ENCODE measurements at regions of chr13 and their contacts with region 1.

Region 1: GRCh38 chr13:39273953-39274738 is 235.9 kb downstream of the NHLRC3 start:
- DNase-seq: no peak
- ATAC-seq: peak; percentile 50

Region 2: DNA sequence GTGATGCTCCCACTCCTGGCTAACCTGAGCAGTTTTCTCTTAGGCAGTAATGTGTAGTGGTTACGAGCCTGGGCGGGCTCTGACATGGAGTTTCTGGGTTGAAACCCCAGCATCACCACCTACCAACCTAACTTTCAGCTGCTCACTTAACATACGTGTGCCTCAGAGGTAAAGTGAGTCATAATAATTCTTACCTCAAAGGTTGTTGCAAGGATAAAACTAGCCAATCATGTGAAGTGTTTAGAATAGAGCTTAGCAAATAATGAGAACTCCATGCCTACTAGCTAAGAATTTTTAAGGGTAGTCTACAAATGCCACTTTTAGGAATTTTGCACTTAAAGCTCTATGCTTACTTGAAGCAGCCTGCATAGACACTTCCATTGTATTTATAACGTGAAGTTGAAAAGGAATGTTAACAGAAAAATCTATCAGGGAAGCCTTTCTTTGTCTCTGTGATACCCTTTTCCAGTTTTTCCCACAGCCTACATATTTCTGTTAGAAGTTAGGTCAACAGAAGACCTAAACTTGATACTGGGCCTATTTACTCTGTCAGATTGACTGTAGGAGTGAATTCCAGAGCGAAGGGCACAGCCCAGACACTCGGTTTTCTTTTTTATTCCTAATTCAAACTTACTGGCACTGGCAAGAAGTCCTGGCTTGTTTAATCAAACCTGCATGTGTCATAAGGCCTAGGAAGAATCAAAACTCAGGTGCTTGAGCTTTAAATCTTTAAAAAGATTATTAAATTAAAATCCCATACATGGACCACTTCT is 496.6 kb before region 1 on chr13:
- intact Hi-C with region 1: no loop called
- DNase-seq: no peak
- ATAC-seq: no peak

Region 3: GRCh38 chr13:39311619-39312018 is 37.5 kb after region 1 on chr13:
- intact Hi-C with region 1: loop called (anchors 5 kb)
- DNase-seq: no peak
- ATAC-seq: peak; percentile 87

Region 4: DNA sequence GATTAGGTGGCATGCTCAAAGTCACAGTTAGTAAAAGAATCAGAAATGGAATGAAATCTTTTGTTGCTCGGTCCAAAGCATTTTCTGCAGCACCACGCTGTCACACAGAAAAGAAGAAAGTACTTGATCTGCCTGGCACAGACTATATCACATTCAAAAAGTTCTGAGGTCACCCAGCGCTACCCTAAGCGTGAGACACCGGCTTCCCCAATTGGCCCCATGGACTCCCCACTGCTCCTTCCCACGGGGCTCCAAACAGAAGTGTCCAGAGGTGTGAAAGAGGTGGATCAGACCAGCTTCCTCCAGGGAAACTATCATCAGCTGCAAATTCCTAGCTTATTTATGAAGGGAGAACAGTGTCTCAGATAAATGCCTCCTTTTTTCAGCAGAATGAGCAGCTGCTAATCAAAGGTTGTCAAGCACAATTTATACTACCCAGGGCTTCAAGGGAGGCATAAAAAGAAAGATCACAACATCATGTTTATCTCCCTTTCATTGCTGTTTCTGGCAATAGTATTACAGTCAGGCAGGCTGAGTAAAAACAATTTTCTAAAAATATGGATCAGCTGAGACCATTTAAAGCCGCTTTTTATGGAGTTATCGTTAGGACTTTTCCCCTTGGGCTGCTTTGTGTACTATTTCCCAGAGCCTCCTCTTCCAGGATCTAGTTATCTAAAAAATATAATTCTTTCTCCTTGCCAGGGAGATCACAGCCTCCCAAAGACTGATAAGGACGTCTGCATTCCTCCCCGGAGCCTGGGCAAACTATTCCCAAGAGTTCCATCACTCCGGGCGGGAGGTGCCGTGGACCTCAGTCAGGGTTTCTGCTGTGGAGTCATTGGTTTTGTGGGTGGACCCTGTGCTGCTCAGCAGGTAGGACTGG is 120.9 kb after region 1 on chr13:
- intact Hi-C with region 1: loop called (anchors 5 kb)
- DNase-seq: no peak
- ATAC-seq: peak; percentile 56

Region 5: DNA sequence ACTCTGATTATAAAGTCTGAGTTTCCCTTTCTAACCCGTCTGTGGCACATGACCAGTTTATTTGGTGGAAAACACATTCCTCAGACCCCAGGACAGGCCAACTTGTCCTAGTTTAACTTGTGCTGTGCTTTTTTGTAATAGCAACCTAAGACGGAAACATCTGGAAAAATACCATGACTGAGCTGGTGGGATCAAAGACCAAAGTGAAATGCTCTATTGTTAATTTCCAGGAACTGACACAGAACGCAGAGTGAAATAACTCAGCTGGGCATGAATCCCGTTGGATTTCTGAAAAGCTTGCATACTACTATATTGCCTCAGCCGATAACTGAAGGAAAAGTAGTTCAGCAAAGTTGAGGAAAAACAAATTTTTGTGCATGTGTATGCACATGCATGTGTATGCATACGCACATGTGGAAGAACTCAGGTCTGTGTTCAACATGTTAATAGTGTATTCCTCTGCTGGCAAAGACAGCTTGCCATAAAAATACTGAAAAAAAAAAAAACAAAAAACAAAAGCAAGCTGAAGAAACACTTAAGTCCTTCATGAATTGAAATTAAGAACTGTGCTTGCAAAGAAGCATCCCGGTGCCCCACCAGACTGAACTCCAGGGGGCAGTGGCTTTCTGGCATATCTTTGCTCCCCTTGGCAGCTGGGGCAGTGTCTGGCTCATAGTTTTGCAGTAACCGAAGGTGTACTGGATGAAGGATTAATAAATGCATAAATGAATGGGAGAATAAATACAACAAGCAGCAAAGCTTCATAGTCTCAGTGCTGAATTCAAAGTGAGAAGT is 141.1 kb after region 1 on chr13:
- intact Hi-C with region 1: loop called (anchors 5 kb)
- DNase-seq: no peak
- ATAC-seq: peak; percentile 70

Region 6: GRCh38 chr13:39616087-39616694 is 342.0 kb after region 1 on chr13:
- intact Hi-C with region 1: loop called (anchors 2 kb)
- DNase-seq: no peak
- ATAC-seq: peak; percentile 84

Region 7: GRCh38 chr13:40026741-40027140 is 752.6 kb after region 1 on chr13:
- intact Hi-C with region 1: no loop called
- DNase-seq: no peak
- ATAC-seq: no peak